ENCODE measurements at regions of chr21 and their contacts with region 1.

Region 1: GRCh38 chr21:33924079-33924765 is 8.6 kb upstream of the ATP5PO start:
- DNase-seq: no peak
- H3K4me3 ChIP-seq: no peak overlapping the region
- CTCF ChIP-seq: peak; percentile 88

Region 2: DNA sequence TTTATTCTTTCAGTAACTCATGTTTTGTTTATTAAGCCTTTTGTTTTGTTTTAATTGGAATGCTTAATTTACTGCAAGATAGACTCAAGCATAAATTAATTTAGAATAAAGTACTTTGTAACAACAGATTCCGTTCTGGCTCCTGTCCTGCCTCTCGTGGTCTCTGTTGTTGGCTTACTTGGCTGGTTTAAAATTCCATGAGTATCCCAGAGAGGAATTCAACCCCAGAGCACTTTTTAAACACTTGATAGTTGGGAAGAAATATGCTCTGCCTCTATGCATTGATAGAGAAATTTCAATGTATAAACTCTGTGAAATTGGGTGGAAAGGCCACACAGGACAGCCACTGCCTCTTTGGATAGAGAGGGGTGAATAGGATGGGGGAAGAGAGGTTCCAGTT is 98.3 kb before region 1 on chr21:
- CTCF ChIA-PET with region 1: no interaction called
- POLR2A ChIA-PET with region 1: no interaction called
- DNase-seq: peak; percentile 28
- H3K4me3 ChIP-seq: no peak overlapping the region
- CTCF ChIP-seq: no peak

Region 3: DNA sequence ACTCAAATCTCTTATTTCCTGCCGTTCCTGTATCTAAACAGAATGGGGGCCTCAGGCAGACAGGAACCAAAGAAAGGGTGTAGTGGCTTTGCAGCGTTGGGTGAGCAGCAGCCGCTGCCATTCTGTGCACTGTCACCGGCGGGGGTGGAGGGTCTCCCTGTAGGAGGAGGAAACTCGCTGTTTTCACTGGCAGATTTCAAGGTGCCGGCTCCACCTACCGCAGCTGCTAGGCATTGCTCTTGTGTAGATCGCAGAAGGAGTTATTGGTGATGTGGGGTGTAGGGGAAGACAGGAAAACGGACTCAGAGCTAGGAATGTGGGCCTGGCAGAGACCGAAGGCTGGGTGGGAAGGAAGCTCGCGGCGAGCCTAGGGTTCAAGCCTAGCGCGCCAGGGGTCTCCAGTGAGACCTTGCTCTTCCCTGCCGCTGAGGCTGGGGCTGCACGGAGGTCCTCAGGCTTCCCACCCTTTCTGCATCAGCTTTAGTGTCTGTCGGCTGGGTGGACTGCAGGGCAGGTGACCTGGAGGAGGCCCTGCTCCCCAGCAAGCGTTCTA is 29.4 kb before region 1 on chr21:
- CTCF ChIA-PET with region 1: no interaction called
- POLR2A ChIA-PET with region 1: no interaction called
- DNase-seq: peak; percentile 41
- H3K4me3 ChIP-seq: peak overlapping the region; percentile 43
- CTCF ChIP-seq: peak; percentile 92

Region 4: DNA sequence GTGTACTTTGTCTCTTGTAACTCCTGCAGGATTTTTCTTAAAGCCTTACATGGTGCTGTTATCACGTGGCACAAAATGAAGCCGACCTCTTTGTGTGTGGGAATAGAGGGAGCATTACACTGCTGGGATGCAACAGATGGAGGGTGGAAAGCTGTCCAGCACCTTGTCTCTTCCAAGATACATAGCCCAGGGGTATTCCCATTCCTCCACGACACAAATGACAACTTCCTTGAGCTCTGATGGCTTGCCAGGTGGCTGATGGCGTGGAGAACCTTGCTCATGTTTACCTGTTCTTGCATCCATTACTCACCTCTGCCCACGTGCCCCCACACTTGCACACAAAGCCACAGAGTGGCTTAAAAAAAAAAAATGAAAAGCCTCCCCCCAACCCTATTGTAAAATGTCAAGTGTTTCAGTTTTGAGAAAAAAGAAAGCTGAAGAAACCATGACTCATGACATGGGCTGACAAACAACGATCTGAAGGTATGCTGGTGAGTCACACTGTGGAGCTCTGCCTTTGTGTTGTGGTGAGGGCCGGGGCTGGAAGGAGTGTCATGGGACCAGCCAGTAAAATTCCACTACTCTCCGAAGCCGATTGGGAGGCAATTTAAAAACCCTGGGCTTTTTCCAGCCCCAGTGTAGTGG is 23.4 kb after region 1 on chr21:
- CTCF ChIA-PET with region 1: interaction called, 10 read pairs
- POLR2A ChIA-PET with region 1: no interaction called
- DNase-seq: peak; percentile 84
- H3K4me3 ChIP-seq: peak overlapping the region; percentile 40
- CTCF ChIP-seq: no peak

Region 5: GRCh38 chr21:34073032-34073869 is 149.0 kb after region 1 on chr21 and contains the starts of genes MRPS6 and SLC5A3:
- CTCF ChIA-PET with region 1: interaction called, 37 read pairs
- POLR2A ChIA-PET with region 1: interaction called, 6 read pairs
- DNase-seq: no peak
- H3K4me3 ChIP-seq: peak within 1 kb of the TSS; percentile 85
- CTCF ChIP-seq: no peak

Region 6: DNA sequence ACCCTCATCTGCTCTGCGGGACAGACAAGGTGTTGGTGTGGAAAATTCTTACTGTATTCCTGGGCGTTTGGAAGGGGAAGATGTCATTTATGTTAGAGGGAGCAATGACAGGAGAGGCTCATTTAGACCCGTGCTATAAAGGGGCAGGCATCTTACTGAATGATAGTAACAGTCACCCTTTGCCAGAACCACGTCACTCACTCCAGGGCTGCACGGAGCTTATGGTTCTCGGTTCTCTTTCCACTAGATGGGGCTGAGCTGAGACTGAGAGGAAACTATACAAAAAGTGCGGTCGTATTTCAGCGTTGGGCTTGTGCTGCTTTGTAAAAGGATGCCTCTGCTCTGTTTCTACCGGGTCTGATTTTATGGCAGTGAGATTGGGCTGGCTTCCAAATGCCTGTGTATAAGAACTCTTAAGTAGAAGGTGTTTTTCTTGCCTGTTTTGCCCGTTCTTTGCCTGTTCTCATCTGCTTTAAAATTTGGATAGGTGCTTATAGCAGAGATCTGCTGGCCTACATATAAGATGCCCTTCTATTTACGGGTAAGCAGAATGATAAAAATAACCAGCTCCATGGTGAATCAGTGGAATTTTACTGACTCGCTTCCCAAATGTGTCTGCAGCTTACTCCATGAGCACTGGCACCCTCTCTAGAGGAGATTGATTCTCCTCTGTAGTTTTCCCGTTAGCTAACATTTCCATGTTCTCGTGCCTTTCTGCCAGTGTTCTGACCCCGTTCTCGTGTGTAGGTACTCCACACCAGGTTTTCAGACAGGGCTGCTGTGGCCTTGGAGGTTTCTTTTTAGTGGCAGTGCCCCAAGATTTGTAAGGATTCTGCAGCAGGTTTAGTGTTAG is 205.0 kb after region 1 on chr21:
- CTCF ChIA-PET with region 1: interaction called, 22 read pairs
- POLR2A ChIA-PET with region 1: no interaction called
- DNase-seq: peak; percentile 58
- H3K4me3 ChIP-seq: peak overlapping the region; percentile 29
- CTCF ChIP-seq: peak; percentile 62

Region 7: GRCh38 chr21:34243562-34243961 is 319.3 kb after region 1 on chr21:
- CTCF ChIA-PET with region 1: interaction called, 32 read pairs
- POLR2A ChIA-PET with region 1: no interaction called
- DNase-seq: no peak
- H3K4me3 ChIP-seq: no peak overlapping the region
- CTCF ChIP-seq: peak; percentile 46

Region 8: GRCh38 chr21:34367321-34367935 is 443.2 kb after region 1 on chr21:
- CTCF ChIA-PET with region 1: interaction called, 15 read pairs
- POLR2A ChIA-PET with region 1: no interaction called
- DNase-seq: peak; percentile 60
- H3K4me3 ChIP-seq: no peak overlapping the region
- CTCF ChIP-seq: peak; percentile 66

Measured in AG04449 (cell line).